Psoas muscle (tissue), 8 donors: ENCODE measurements at regions of chr5 and their contacts with region 1.

Region 1: DNA sequence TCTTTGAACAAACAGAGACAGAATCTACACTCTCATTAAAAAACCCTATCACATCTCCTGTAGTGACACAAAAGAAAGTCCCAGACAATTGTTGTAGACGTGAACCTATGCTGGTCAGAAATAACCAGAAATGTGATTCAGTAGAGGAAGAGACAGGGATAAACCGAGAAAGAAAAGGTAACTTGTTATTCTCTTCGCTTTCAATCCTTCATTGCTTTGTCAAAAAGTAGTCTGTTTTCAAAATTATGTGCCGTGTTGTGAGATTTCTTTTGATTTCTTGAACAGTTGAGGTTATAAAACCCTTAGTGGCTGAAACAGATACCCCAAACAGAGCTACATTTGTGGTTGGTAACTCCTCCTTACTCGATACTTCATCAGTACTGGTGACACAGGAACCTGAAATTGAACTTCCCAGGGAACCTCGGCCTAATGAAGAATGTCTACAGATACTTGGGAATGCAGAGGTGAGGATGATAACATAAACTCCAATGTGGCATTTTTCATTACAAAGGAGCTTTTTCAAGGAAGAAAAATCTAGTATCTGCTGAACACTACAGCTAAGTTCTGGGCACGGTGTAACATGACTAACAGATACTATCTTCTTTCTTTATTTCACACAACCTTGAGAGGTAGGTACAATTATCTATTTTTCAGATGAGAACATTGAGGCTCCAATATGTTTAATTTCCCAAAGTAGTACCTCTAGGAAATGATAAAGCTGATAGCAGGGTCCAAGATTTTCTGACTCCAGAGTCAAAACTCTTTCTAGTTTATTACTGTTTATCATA is 14.3 kb downstream of the HMGCR start:
- DNase-seq: no peak
- ATAC-seq: no peak
- H3K4me3 ChIP-seq: no peak overlapping the region
- H3K27ac ChIP-seq: no peak overlapping the region
- H3K4me1 ChIP-seq: no peaks in the 10 kb centered on the region
- H3K27me3 ChIP-seq: no peaks in the 10 kb centered on the region
- CTCF ChIP-seq: no peak

Region 2: GRCh38 chr5:75566710-75567309 is 215.5 kb after region 1 on chr5:
- intact Hi-C with region 1: no loop called
- DNase-seq: no peak
- ATAC-seq: peak; percentile 76 to 99 (median 92)
- H3K4me3 ChIP-seq: no peak overlapping the region
- H3K27ac ChIP-seq: peak overlapping the region; percentile 44
- H3K4me1 ChIP-seq: peaks cover 12% of the 10 kb centered on the region
- H3K27me3 ChIP-seq: no peaks in the 10 kb centered on the region
- CTCF ChIP-seq: no peak

Region 3: GRCh38 chr5:75584641-75585040 is 233.3 kb after region 1 on chr5:
- intact Hi-C with region 1: loop called in 1 of 2 experiments (anchors 10 kb)
- DNase-seq: no peak
- ATAC-seq: no peak
- H3K4me3 ChIP-seq: no peak overlapping the region
- H3K27ac ChIP-seq: no peak overlapping the region
- H3K4me1 ChIP-seq: no peaks in the 10 kb centered on the region
- H3K27me3 ChIP-seq: no peaks in the 10 kb centered on the region
- CTCF ChIP-seq: no peak